ENCODE measurements at regions of chr19 and their contacts with region 1.

Region 1: GRCh38 chr19:32339988-32340874 is 5.2 kb upstream of the ZNF507 start:
- DNase-seq: peak; percentile 77 to 87
- ATAC-seq: peak; percentile 89 to 93
- H3K4me3 ChIP-seq: no peak overlapping the region
- H3K27ac ChIP-seq: peak overlapping the region in 1 of 2 experiments; percentile 33; a peak in 1 of 6 replicates
- H3K4me1 ChIP-seq: peaks cover 9% of the 10 kb centered on the region; the same call in 1 of the 3 replicates
- CTCF ChIP-seq: peak; percentile 90
- EP300 ChIP-seq: no peak
- POLR2A ChIP-seq: no peak
- RAD21 ChIP-seq: peak; percentile 79 to 82

Region 2: DNA sequence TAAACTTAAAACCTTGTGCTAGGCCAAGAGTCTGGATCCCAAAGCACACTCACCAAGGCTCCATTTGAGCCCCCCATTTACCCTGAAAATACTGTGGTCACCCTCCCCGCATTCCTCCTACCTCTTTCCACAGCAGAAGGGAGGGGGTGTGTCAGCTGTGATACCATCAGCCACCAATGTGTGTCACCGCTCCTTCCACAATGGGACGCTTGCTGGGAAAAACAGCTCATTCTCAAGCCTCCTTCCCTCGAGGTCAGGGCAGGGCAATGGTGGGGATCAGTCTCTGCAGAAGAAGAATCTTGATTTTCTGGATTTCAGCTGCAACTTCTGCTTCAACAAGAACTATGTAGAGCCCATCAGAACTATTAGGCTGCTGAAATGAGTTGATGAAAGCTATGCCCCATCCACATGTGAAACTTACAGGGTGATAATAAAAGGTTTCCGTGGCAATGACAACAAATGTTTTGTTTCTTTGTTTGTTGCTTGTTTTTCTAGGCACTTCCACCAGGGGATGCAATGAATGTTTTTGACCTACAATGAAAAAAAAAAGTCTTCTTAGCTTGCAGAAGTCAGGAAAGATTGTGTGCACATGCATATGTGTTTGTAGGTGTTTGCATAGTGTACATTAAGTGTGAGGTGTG is 21.2 kb before region 1 on chr19:
- CTCF ChIA-PET with region 1: interaction called, 79 read pairs
- POLR2A ChIA-PET with region 1: interaction called, 3 read pairs
- DNase-seq: peak; percentile 68 to 75
- ATAC-seq: peak; percentile 83 to 86; a peak in 5 of 6 replicates
- H3K4me3 ChIP-seq: no peak overlapping the region
- H3K27ac ChIP-seq: no peak overlapping the region
- H3K4me1 ChIP-seq: 0 out of 3 replicates have a peak, but pooled peaks cover 3% of the 10 kb centered on the region
- CTCF ChIP-seq: peak; percentile 37; the same call in 2 of the 3 replicates
- EP300 ChIP-seq: no peak
- POLR2A ChIP-seq: no peak
- RAD21 ChIP-seq: peak; percentile 22 to 42; a peak in 3 of 5 replicates

Region 3: GRCh38 chr19:32357720-32358119 is 17.5 kb after region 1 on chr19:
- CTCF ChIA-PET with region 1: interaction called, 74 read pairs
- POLR2A ChIA-PET with region 1: no interaction called
- DNase-seq: peak; percentile 46 to 61
- ATAC-seq: peak; percentile 66 to 73; a peak in 4 of 6 replicates
- H3K4me3 ChIP-seq: no peak overlapping the region
- H3K27ac ChIP-seq: no peak overlapping the region
- H3K4me1 ChIP-seq: peaks cover 17% of the 10 kb centered on the region
- CTCF ChIP-seq: peak; percentile 70
- EP300 ChIP-seq: no peak
- POLR2A ChIP-seq: no peak
- RAD21 ChIP-seq: peak; percentile 54 to 55

Region 4: GRCh38 chr19:32373585-32374295 is 33.5 kb after region 1 on chr19:
- CTCF ChIA-PET with region 1: interaction called, 122 read pairs
- POLR2A ChIA-PET with region 1: interaction called, 29 read pairs
- DNase-seq: peak; percentile 96 to 100
- ATAC-seq: peak; percentile 98 to 99
- H3K4me3 ChIP-seq: peak overlapping the region; percentile 30
- H3K27ac ChIP-seq: peak overlapping the region; percentile 84 to 89
- H3K4me1 ChIP-seq: peaks cover 55% of the 10 kb centered on the region
- CTCF ChIP-seq: no peak
- EP300 ChIP-seq: peak; percentile 82 to 95; a peak in 3 of 5 replicates
- POLR2A ChIP-seq: no peak
- RAD21 ChIP-seq: peak in 1 of 2 experiments; percentile 42; a peak in 2 of 5 replicates

Region 5: DNA sequence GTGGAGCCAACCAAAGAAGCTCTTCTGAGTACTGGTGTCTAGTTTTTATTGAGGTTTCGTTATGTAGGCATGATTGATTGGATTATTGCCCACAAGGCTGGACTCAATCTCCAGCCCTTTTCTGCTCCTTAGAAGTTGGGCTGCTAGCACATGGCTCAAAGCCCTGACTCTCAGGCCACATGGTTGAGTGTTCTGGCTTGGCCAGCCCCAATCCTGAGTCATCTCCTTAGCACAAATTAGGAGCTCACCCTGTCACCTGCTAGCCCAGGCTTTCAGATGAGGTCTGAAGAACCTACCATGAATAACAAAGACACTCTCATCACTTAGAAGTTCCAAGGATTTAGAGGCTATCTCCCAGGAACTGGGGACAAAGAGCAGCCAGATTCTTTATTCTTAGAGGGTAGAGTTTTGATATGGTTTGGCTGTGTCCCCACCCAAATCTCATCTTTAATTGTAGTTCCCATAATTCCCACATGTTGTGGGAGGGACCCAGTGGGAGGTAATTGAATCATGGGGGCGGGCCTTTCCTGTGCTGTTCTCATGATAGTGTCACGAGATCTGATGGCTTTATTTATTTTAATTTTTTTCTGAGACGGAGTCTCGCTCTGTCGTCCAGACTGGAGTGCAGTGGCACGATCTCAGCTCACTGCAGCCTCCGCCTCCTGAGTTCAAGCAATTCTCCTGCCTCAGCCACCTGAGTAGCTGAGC is 76.7 kb after region 1 on chr19:
- CTCF ChIA-PET with region 1: interaction called, 17 read pairs
- POLR2A ChIA-PET with region 1: no interaction called
- DNase-seq: no peak
- ATAC-seq: no peak
- H3K4me3 ChIP-seq: no peak overlapping the region
- H3K27ac ChIP-seq: no peak overlapping the region
- H3K4me1 ChIP-seq: no peaks in the 10 kb centered on the region
- CTCF ChIP-seq: no peak
- EP300 ChIP-seq: no peak
- POLR2A ChIP-seq: no peak
- RAD21 ChIP-seq: no peak